GM10248 (cell line): ENCODE measurements at regions of chr11 and their contacts with region 1.

Region 1: DNA sequence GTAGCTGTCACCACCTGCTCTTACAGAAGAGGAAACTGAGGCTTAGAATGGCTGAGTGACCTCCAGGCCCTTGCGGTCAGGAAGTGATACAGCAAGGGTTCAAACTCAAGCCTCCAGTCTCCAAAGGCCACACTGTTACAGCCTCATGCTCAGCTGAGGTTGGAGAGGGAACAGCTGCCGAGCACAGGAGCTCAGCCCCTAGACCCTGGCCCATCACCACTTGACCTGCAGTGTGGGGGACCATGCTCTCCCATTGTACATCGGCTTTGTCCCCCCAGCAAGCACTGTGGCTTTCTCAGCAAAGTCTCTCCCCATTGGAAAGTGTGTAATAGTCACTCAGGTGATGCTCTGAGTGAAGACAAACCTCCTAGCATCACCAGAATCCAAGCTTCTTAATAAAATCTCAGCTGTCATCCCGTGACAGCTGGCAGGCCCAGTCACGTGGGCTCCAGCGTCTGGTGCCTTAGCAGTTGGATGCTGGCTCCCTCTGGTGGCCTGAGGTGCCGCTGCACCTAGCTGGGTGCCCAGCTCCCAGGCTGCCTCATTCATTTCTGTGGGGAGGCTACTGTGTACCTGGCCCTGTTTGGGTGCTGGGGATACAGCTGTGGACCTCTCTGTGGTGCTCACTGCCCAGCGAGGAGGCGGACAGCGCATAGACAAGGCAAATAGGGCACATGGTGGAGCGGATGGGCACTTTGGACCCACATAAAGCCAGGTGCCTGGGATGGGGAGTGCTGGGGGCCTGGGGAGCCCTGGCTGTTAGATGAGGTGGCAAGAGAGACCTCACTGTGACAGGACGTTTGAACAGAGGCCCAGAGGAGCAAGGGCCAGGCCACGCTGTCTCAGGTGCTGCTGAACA is 19.1 kb upstream of the MYRF start:
- DNase-seq: peak; percentile 95
- CTCF ChIP-seq: peak; percentile 99

Region 2: DNA sequence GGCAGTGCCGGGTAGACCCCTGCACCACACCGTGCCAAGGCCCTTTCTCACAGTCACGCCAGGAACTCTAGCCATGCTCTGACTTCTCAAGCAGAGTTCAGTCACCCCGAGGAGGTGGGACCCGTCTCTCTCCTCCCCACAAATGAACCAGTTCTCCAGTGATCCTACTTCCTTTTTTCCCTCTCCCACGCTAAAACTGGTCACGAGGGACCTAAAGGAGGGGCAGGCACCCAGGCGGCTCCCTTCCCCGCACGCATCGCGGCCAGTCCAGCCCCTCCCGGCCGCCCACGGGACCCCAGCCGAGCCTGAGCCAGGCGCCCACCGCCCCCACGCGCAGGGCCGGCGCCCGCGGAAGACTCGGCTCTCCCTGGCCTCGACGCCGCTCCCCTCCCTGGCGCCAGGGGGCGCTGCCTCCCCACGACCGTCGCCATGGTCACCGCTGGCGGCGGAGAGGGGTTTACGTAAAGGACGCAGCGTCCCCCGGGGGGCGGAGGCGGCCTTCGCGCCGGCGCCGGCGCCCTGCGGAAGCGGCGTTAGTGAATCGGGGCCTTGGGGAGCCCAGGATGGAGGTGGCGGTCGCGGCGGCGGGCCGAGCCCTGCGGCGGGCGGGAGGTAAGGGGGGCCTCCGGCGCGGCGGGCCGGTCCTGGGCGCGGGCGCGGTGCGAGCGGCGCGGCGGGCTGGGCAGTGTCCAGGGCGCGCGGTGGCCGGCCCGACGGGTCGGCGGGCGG is 53.3 kb before region 1 on chr11 and contains the start of gene DAGLA:
- CTCF ChIA-PET with region 1: interaction called, 21 read pairs
- POLR2A ChIA-PET with region 1: no interaction called
- DNase-seq: peak; percentile 92
- CTCF ChIP-seq: peak; percentile 94

Region 3: DNA sequence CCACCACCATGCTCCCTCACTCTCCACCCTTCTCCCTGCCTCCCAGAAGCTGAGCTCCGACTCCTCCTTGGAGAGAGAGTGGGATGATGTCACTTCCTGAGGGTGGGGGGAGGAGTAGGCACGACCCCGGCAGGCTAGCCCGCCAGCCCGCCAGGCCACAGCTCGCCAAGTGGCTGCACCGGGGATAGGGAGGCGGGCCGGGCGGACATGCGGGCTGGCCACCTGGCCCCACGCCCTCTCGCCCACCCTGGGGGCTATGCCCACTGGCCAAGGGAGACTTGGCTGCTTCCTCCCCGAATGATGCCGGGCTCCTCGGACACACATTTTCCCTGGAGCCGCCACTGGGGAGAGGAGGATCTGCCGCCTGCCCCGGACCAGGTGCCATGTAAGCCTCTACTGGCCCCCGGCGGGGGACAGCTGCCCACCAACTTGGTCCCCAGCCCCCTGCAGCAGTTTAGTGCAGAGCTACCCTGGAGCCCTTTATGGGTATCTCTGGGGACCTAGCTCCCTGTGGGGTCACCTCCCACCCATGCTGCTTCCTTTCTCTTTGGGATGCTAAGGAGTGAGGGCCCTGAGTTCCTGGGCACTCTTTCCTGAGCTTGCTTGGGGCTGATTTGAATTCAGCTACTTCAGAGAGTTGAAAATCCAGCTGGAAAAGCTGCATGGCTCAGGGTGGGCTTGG is 14.6 kb before region 1 on chr11:
- CTCF ChIA-PET with region 1: interaction called, 56 read pairs
- POLR2A ChIA-PET with region 1: no interaction called
- DNase-seq: no peak
- CTCF ChIP-seq: no peak